Stomach (tissue), 19 donors: ENCODE measurements at regions of chrX and their contacts with region 1.

Region 1: GRCh38 chrX:15960237-15960636 is 105.6 kb upstream of the AP1S2 start:
- DNase-seq: no peak
- H3K4me3 ChIP-seq: no peak overlapping the region
- H3K27ac ChIP-seq: no peak overlapping the region
- H3K4me1 ChIP-seq: no peaks in the 10 kb centered on the region
- H3K27me3 ChIP-seq: no peaks in the 10 kb centered on the region
- CTCF ChIP-seq: no peak
- EP300 ChIP-seq: no peak
- POLR2A ChIP-seq: no peak

Region 2: DNA sequence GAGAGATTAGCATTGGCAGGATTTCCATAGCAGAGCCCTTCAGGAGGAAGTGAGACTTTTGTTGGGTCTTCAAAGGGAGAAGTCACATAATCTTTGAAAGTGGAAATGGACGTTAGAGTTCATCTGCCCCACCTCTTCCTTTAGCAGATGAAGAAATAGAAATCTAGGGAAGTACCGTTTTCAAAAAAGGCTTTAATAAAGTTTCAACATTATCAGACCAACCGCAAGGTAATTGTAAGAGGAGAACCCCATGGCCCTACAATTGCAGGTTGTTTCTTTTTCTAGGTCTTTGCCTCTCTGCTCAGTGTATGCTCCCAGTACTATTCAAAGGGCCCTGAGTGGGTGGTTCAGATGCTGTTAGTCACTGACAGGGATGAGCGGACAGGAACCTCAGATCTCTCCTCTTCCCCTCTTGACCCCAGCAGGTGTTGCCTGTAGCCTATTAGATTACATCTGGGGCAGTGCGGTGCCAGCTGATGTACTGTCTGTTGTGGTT is 57.0 kb before region 1 on chrX:
- intact Hi-C with region 1: loop called (anchors 10 kb)
- DNase-seq: peak in 1 of 2 donors; percentile 16
- H3K4me3 ChIP-seq: no peak overlapping the region
- H3K27ac ChIP-seq: no peak overlapping the region
- H3K4me1 ChIP-seq: no peaks in the 10 kb centered on the region
- H3K27me3 ChIP-seq: peaks cover 0 to 5% (median 0%) of the 10 kb centered on the region in 3 donors
- CTCF ChIP-seq: no peak
- EP300 ChIP-seq: no peak
- POLR2A ChIP-seq: no peak